H1 (cell line): ENCODE measurements at regions of chr12 and their contacts with region 1.

Region 1: DNA sequence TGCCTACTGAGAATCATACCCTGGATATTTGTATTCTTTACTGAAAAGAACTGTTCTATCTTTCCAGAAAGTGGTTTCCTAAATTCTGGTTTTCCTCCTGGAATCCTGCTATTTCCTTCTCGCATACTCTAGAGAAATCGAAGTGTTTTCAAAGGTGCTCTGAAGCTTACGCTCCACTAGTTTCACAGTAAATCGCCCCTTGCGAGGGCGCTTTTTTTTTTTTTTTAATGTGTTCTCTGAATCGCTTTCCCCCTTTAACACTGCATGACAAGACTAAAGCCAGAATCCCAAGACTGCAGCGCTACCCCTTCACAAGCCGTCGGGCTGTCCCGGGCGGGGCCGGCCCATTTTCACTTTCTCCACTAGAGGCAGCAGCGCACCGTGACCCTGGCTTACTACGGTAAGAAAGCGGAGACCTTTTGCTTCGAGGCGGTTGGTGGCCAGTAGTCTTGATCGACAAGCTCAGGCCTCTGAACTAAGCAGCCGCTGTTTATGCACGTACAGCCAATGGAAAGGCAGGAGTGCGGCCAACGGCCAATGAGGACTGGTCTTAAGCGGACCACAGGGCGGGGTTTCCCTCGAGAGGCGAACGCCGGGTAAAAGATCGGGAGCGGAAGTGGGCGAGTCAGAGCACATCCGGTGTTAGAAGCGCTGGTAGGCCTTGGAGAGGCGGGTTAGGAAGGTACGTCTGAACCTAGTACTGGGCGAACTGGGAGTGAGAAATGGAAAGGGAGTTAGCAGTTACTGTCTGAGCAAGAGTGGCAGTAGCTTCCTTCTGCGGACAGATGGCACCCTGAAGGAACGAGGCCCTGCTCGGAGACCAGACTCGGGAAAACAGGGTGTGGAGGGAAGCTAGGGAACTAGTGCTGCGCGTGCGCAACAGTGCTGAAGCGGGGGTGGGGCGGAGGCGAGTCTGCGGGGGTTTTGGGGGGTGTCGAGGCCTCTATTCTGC is at the start of gene TMBIM6:
- DNase-seq: peak; percentile 99 to 100
- H3K4me3 ChIP-seq: peak within 1 kb of the TSS; percentile 74 to 95 (median 82)
- H3K27ac ChIP-seq: peak within 1 kb of the TSS; percentile 93
- H3K4me1 ChIP-seq: peaks cover 0 to 3% (median 2%) of the 10 kb centered on the region in 4 experiments; a peak in 2 of 7 replicates
- H3K27me3 ChIP-seq: no peaks in the 10 kb centered on the region
- CTCF ChIP-seq: peak; percentile 84 to 96 (median 86)
- EP300 ChIP-seq: peak in 1 of 2 experiments; percentile 20; a peak in 1 of 3 replicates
- POLR2A ChIP-seq: peak; percentile 99
- RAD21 ChIP-seq: peak; percentile 55 to 70
- total RNA-seq, gene TMBIM6: 413 and 423 TPM in 2 replicates

Region 2: DNA sequence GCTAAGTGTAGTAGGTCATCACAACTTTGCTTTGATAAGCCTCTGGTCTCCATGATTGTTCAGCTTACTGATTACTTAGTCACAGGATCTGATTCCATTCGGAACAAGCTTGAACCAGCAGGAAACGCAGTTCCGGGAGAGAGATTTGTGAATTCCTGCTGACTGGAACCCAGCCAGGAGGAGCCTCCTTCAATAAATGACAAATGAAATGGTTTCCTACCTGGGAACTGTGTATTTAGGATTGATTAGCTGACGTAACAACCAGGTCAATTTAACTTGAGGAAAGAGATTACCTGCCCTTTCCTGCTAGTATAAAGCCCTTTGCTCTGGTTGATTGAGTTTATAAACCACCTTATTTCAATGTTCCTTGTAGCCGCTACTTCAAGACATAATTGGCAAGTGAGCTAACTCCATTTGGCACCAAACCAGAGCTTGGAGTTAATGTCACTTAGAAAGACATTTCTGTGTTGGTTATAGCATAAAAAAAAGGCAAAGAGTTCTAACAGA is 237.5 kb before region 1 on chr12:
- CTCF ChIA-PET with region 1: no interaction called
- POLR2A ChIA-PET with region 1: no interaction called
- DNase-seq: no peak
- H3K4me3 ChIP-seq: no peak overlapping the region
- H3K27ac ChIP-seq: no peak overlapping the region
- H3K4me1 ChIP-seq: no peaks in the 10 kb centered on the region
- H3K27me3 ChIP-seq: no peaks in the 10 kb centered on the region
- CTCF ChIP-seq: no peak
- EP300 ChIP-seq: no peak
- POLR2A ChIP-seq: no peak
- RAD21 ChIP-seq: no peak

Region 3: GRCh38 chr12:49636979-49637755 is 104.0 kb before region 1 on chr12:
- CTCF ChIA-PET with region 1: interaction called, 18 read pairs
- POLR2A ChIA-PET with region 1: interaction called, 25 read pairs
- DNase-seq: no peak
- H3K4me3 ChIP-seq: no peak overlapping the region
- H3K27ac ChIP-seq: no peak overlapping the region; the same call in 1 of the 2 replicates
- H3K4me1 ChIP-seq: peaks cover 0 to 10% (median 5%) of the 10 kb centered on the region in 4 experiments; a peak in 5 of 7 replicates
- H3K27me3 ChIP-seq: no peaks in the 10 kb centered on the region
- CTCF ChIP-seq: peak; percentile 64 to 84 (median 79)
- EP300 ChIP-seq: no peak
- POLR2A ChIP-seq: peak; percentile 37 to 62; a peak in 2 of 3 replicates
- RAD21 ChIP-seq: peak; percentile 68 to 80

Region 4: DNA sequence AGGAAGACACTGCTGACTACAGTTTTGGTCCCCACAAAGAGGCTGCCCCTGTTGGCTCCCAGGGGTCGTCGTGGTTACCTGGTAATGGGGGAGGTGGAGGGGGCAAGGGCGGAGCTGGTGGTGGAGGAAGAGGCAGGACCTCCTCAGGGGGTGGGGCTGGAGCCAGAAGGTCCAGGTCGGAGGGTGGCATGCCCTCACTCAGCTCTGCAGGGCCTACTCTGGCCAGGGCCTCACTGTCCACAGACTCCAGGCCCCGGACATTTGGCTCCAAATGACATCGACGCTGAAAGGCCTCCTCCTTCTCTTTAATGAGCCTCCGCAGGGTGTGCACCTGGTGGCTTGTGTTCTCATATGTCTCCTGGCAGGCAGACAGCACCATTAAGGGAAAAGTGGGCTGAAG is 89.4 kb before region 1 on chr12:
- CTCF ChIA-PET with region 1: interaction called, 7 read pairs
- POLR2A ChIA-PET with region 1: interaction called, 14 read pairs
- DNase-seq: no peak
- H3K4me3 ChIP-seq: no peak overlapping the region
- H3K27ac ChIP-seq: no peak overlapping the region
- H3K4me1 ChIP-seq: no peaks in the 10 kb centered on the region
- H3K27me3 ChIP-seq: no peaks in the 10 kb centered on the region
- CTCF ChIP-seq: no peak
- EP300 ChIP-seq: no peak
- POLR2A ChIP-seq: no peak
- RAD21 ChIP-seq: no peak

Region 5: DNA sequence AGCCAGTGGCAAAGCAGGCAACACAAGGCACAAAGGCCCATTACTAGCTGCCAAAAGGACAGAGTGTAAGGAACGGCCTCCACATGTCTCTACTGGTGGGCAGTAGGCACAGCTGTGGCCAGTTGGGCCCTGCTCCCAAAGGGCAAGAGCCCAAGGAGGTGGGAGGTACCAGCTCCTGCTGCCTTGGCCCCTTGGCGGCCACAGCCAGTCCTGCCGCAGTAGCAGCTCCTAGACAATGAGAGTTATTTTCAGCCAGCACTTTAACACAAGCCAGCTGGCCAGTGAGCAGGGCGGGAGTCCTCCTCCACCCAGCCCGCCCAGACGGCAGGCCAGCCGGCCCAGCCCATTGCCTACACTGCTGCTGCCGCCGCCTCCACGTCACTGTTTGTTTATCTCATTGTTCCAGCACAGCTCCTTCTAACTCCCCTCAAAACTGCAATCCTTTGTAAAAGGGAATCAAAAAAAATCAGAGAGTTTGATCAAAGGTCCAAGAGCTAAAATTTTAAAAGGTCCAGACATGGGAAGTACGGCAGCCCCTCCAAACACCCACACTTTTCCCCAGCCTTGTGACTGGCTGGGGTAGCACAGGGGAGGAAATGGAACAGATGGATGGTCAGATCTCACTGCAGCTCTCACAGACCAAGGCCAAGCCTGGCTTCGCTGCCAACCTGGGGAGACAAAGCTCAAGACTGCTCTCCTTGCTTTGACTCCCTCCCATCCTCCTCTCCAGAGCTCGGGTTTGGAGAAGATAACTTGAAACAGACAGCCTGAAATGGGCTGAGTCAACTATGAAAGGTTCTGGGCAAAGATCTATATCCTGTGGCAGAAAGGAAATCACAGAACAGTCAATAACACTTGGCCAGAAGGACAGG is 67.5 kb before region 1 on chr12:
- CTCF ChIA-PET with region 1: interaction called, 5 read pairs
- POLR2A ChIA-PET with region 1: interaction called, 22 read pairs
- DNase-seq: peak in 1 of 2 experiments; percentile 61
- H3K4me3 ChIP-seq: no peak overlapping the region
- H3K27ac ChIP-seq: 0 out of 2 replicates have a peak overlapping the region, but pooled peaks have one; percentile 6
- H3K4me1 ChIP-seq: peaks cover 3 to 7% (median 6%) of the 10 kb centered on the region in 4 experiments
- H3K27me3 ChIP-seq: no peaks in the 10 kb centered on the region
- CTCF ChIP-seq: peak in 1 of 3 experiments; percentile 9; a peak in 1 of 4 replicates
- EP300 ChIP-seq: no peak
- POLR2A ChIP-seq: no peak
- RAD21 ChIP-seq: 0 out of 4 replicates have a peak, but pooled peaks of 1 of the 2 experiments have one; percentile 6

Region 6: GRCh38 chr12:49698619-49699545 is 42.3 kb before region 1 on chr12:
- CTCF ChIA-PET with region 1: interaction called, 10 read pairs
- POLR2A ChIA-PET with region 1: interaction called, 22 read pairs
- DNase-seq: peak; percentile 57 to 67
- H3K4me3 ChIP-seq: peak overlapping the region in 3 of 4 experiments; percentile 16 to 49 (median 32); a peak in 4 of 8 replicates
- H3K27ac ChIP-seq: peak overlapping the region; percentile 64; the same call in 1 of the 2 replicates
- H3K4me1 ChIP-seq: peaks cover 7 to 45% (median 22%) of the 10 kb centered on the region in 4 experiments
- H3K27me3 ChIP-seq: no peaks in the 10 kb centered on the region
- CTCF ChIP-seq: no peak
- EP300 ChIP-seq: no peak
- POLR2A ChIP-seq: peak in 1 of 2 experiments; percentile 63; a peak in 1 of 3 replicates
- RAD21 ChIP-seq: no peak

Region 7: GRCh38 chr12:49720214-49720613 is 21.0 kb before region 1 on chr12:
- CTCF ChIA-PET with region 1: interaction called, 14 read pairs
- POLR2A ChIA-PET with region 1: interaction called, 11 read pairs
- DNase-seq: no peak
- H3K4me3 ChIP-seq: no peak overlapping the region
- H3K27ac ChIP-seq: no peak overlapping the region
- H3K4me1 ChIP-seq: no peaks in the 10 kb centered on the region
- H3K27me3 ChIP-seq: no peaks in the 10 kb centered on the region
- CTCF ChIP-seq: peak in 1 of 3 experiments; percentile 10; a peak in 2 of 4 replicates
- EP300 ChIP-seq: no peak
- POLR2A ChIP-seq: no peak
- RAD21 ChIP-seq: peak in 1 of 2 experiments; percentile 9; a peak in 1 of 4 replicates

Region 8: GRCh38 chr12:49828133-49829091 is 87.2 kb after region 1 on chr12 and contains the start of gene NCKAP5L:
- CTCF ChIA-PET with region 1: no interaction called
- POLR2A ChIA-PET with region 1: interaction called, 19 read pairs
- DNase-seq: peak; percentile 90 to 96
- H3K4me3 ChIP-seq: peak within 1 kb of the TSS; percentile 77 to 90 (median 84)
- H3K27ac ChIP-seq: peak within 1 kb of the TSS; percentile 78
- H3K4me1 ChIP-seq: peaks cover 3 to 27% (median 18%) of the 10 kb centered on the region in 4 experiments
- H3K27me3 ChIP-seq: no peaks in the 10 kb centered on the region
- CTCF ChIP-seq: no peak
- EP300 ChIP-seq: no peak
- POLR2A ChIP-seq: peak; percentile 69 to 81
- RAD21 ChIP-seq: no peak
- total RNA-seq, gene NCKAP5L: 27.9 and 30.2 TPM in 2 replicates